ENCODE measurements at regions of chr1 and their contacts with region 1.

Region 1: GRCh38 chr1:85576642-85577418 is 3.7 kb upstream of the CCN1 start:
- DNase-seq: peak; percentile 86
- H3K4me3 Mint-ChIP-seq: peak overlapping the region; percentile 77
- H3K27ac Mint-ChIP-seq: peak overlapping the region; percentile 94
- H3K4me1 Mint-ChIP-seq: peaks cover 35% of the 10 kb centered on the region
- H3K27me3 Mint-ChIP-seq: no peaks in the 10 kb centered on the region
- CTCF ChIP-seq: peak; percentile 84

Region 2: GRCh38 chr1:85259118-85259911 is 317.5 kb before region 1 on chr1 and contains the start of gene C1orf52:
- CTCF ChIA-PET with region 1: interaction called, 3 read pairs
- POLR2A ChIA-PET with region 1: interaction called, 15 read pairs
- intact Hi-C with region 1: no loop called
- DNase-seq: peak; percentile 88
- H3K4me3 Mint-ChIP-seq: peak within 1 kb of the TSS; percentile 88
- H3K27ac Mint-ChIP-seq: peak within 1 kb of the TSS; percentile 97
- H3K4me1 Mint-ChIP-seq: peaks cover 31% of the 10 kb centered on the region
- H3K27me3 Mint-ChIP-seq: no peaks in the 10 kb centered on the region
- CTCF ChIP-seq: peak; percentile 85
- total RNA-seq, gene C1orf52: 29.6 and 31.7 TPM in 2 replicates

Region 3: GRCh38 chr1:85344256-85344694 is 232.6 kb before region 1 on chr1:
- CTCF ChIA-PET with region 1: interaction called, 11 read pairs
- POLR2A ChIA-PET with region 1: interaction called, 4 read pairs
- intact Hi-C with region 1: loop called (anchors 2 kb)
- DNase-seq: peak; percentile 45
- H3K4me3 Mint-ChIP-seq: no peak overlapping the region
- H3K27ac Mint-ChIP-seq: peak overlapping the region; percentile 16
- H3K4me1 Mint-ChIP-seq: peaks cover 16% of the 10 kb centered on the region
- H3K27me3 Mint-ChIP-seq: no peaks in the 10 kb centered on the region
- CTCF ChIP-seq: peak; percentile 56

Region 4: DNA sequence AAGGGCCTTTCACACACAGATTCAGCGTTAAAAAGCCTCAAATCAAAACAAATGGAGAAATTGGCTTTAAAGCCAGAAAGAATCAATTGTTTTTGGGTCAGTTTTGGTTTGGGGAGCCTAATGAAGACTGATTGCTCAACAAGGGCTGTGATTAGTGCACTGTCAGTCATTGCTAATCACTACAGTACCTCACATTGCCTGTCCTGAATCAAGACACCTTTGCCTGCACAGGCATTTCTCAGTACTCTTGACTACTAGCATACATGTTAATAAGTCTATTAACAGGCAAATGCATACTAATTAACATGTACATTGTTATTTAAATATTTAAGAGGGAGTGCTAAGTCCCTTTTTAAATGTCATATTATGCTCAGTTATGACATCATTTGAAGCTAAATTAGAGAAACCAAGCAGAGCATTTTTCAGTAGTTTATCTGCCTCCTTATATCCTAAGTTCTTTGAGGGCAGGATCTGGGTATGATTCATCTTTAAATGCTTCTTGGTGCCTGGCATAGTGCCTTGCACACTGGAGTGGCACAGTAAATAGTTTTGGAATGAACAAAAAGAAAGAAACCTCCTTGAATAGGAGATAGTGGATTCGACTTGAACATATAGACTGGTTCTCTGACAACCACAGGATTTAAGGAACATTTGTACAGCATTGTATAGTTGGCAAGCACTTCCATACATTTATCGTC is 22.1 kb before region 1 on chr1:
- CTCF ChIA-PET with region 1: interaction called, 10 read pairs
- POLR2A ChIA-PET with region 1: interaction called, 52 read pairs
- intact Hi-C with region 1: no loop called
- DNase-seq: peak; percentile 65
- H3K4me3 Mint-ChIP-seq: no peak overlapping the region
- H3K27ac Mint-ChIP-seq: peak overlapping the region; percentile 52
- H3K4me1 Mint-ChIP-seq: peaks cover 25% of the 10 kb centered on the region
- H3K27me3 Mint-ChIP-seq: no peaks in the 10 kb centered on the region
- CTCF ChIP-seq: no peak

Region 5: DNA sequence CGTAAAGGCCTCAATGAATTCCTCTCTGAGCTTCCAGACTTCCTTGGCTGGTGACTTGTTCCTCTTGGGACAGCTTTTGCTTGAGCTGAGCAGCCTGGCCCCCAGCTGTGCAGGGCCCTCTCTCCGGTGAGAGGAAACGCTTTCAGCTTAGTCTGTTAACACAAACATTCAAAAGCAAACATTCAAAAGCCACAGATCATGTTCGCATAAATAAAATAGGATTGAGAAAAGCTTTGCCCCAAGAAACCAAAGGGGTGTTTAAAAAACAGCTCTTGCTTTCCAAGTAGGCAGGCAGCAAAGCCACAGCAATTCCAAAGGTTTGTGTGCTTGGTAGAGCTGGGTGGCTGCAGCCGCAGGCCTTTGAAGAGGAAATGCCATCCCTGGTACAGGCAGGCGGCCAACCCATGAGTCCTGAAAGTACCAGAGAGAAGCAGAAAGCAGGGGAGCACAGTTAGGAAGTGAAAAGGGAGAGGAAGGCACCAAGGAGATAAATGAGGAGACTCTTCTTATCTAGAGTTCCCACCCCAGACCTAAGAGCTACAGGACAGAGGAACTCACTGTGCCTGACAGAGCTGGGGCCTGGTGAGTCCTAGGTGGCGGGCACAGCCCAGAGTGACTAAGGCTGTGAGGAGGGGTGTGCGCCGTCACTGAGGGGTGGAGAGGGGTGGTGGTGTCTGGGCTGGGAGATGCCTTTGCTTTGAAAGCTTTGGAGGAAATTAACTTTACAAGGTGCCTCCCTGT is 52.1 kb after region 1 on chr1:
- CTCF ChIA-PET with region 1: interaction called, 5 read pairs
- POLR2A ChIA-PET with region 1: interaction called, 7 read pairs
- intact Hi-C with region 1: loop called (anchors 5 kb)
- DNase-seq: peak; percentile 68
- H3K4me3 Mint-ChIP-seq: peak overlapping the region; percentile 24
- H3K27ac Mint-ChIP-seq: peak overlapping the region; percentile 91
- H3K4me1 Mint-ChIP-seq: peaks cover 12% of the 10 kb centered on the region
- H3K27me3 Mint-ChIP-seq: no peaks in the 10 kb centered on the region
- CTCF ChIP-seq: no peak

Region 6: GRCh38 chr1:85850238-85850637 is 273.4 kb after region 1 on chr1:
- CTCF ChIA-PET with region 1: no interaction called
- POLR2A ChIA-PET with region 1: no interaction called
- intact Hi-C with region 1: loop called (anchors 1 kb)
- DNase-seq: peak; percentile 85
- H3K4me3 Mint-ChIP-seq: peak overlapping the region; percentile 41
- H3K27ac Mint-ChIP-seq: peak overlapping the region; percentile 93
- H3K4me1 Mint-ChIP-seq: peaks cover 11% of the 10 kb centered on the region
- H3K27me3 Mint-ChIP-seq: no peaks in the 10 kb centered on the region
- CTCF ChIP-seq: no peak

Measured in MCF 10A (cell line).